HepG2 (cell line): ENCODE measurements at regions of chr4 and their contacts with region 1.

Region 1: DNA sequence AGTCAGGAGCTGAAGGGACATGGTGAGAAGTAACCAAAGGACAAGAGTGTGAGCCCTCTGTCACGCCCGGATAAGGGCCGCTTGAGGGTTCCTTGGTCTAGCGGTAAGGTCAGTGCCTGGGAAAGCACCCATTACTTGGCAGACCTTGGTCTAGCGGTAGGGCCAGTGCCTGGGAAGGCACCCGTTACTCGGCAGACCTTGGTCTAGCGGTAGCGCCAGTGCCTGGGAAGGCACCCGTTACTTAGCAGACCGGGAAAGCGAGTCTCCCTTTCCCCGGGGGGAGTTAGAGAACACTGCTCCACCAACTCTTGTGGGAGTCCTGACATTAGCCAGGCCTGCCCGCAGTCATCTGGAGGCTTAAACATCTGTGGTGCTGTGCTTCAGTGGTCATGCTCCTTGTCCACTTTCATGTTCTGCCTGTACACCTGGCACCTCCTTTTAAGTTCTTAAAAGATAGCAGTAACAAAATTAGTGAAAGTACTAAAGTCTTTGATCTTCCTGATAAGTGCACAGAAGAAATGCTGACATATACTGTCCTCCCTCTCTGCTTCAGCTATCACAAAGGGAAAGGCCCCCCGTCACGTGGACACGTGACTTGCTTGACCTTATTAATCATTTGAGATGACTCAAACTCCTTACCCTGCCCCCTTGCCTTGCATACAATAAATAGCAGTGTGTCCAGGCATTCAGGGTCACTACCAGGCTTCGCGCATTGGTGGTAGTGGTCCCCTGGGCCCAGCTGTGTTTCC is 9.3 kb upstream of the SEC24B start:
- DNase-seq: no peak
- ATAC-seq: no peak
- H3K4me3 ChIP-seq: no peak overlapping the region
- H3K27ac ChIP-seq: no peak overlapping the region
- H3K4me1 ChIP-seq: no peaks in the 10 kb centered on the region
- H3K27me3 ChIP-seq: no peaks in the 10 kb centered on the region
- CTCF ChIP-seq: no peak
- EP300 ChIP-seq: no peak
- POLR2A ChIP-seq: no peak
- RAD21 ChIP-seq: no peak

Region 2: GRCh38 chr4:109574102-109574850 is 150.0 kb after region 1 on chr4:
- CTCF ChIA-PET with region 1: no interaction called
- POLR2A ChIA-PET with region 1: no interaction called
- in situ Hi-C with region 1: no loop called
- intact Hi-C with region 1: loop called (anchors 5 kb)
- DNase-seq: peak; percentile 42
- ATAC-seq: peak; percentile 91
- H3K4me3 ChIP-seq: no peak overlapping the region
- H3K27ac ChIP-seq: no peak overlapping the region
- H3K4me1 ChIP-seq: no peaks in the 10 kb centered on the region
- H3K27me3 ChIP-seq: no peaks in the 10 kb centered on the region
- CTCF ChIP-seq: peak; percentile 38
- EP300 ChIP-seq: no peak
- POLR2A ChIP-seq: no peak
- RAD21 ChIP-seq: no peak

Region 3: DNA sequence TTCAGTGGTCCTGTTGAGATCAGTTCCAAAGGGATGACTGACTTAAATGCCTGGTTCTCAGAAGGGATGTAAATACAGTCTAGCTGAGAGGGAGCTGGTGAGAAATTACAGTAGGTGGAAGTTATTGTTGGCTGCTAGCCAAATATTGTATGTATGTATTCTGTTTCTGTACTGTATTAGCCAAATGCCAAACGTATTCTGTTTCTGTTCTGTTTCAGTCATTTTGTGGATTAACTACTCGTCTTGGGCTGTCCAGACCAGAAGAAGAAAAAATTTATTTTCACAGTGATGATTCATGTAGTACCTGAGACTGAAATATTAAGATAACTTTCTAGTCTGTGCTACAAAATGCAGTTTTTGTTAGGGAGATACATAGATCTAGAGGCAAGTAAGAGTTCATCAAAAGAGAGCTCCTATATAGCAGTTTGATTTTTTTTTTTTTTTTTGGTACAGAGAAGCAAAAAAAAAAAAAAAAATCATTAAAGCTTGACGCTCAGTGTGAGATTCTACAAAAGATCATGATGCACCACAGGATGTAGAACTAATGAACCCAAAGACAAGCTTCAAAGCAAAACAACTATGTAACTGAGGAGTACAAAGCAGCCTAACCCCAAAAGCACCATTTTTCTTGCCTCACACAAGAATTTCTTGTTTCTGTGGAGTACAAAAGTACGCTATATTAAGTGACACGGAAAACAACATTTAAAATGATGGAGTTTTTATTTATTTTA is 224.2 kb after region 1 on chr4:
- CTCF ChIA-PET with region 1: interaction called, 4 read pairs
- POLR2A ChIA-PET with region 1: no interaction called
- in situ Hi-C with region 1: loop called (anchors 10 kb)
- intact Hi-C with region 1: loop called (anchors 1 kb)
- DNase-seq: no peak
- ATAC-seq: no peak
- H3K4me3 ChIP-seq: no peak overlapping the region
- H3K27ac ChIP-seq: no peak overlapping the region
- H3K4me1 ChIP-seq: no peaks in the 10 kb centered on the region
- H3K27me3 ChIP-seq: no peaks in the 10 kb centered on the region; a peak in 1 of 5 replicates
- CTCF ChIP-seq: no peak
- EP300 ChIP-seq: no peak
- POLR2A ChIP-seq: no peak
- RAD21 ChIP-seq: no peak

Region 4: DNA sequence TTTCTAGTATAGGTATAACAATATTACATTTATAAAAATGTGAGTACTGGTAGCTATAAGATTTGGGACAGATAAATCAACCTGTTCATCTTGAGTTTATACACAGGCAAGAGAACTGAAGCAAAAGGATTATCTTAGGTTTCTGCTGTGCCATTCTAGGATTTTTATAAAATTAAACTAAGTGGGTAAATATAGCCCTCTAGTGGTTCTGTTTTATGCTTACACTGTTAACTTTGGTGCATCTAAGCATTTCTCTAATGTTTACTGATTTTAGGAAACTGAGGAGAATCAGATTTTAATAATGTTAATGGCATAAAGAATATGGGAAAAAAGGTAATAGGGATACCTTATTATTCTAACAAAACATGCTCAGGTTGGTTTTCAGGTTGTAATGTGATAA is 402.5 kb after region 1 on chr4:
- CTCF ChIA-PET with region 1: interaction called, 3 read pairs
- POLR2A ChIA-PET with region 1: no interaction called
- in situ Hi-C with region 1: no loop called
- intact Hi-C with region 1: loop called (anchors 1 kb)
- DNase-seq: no peak
- ATAC-seq: peak; percentile 57; the same call in 2 of the 3 replicates
- H3K4me3 ChIP-seq: no peak overlapping the region
- H3K27ac ChIP-seq: no peak overlapping the region
- H3K4me1 ChIP-seq: no peaks in the 10 kb centered on the region
- H3K27me3 ChIP-seq: no peaks in the 10 kb centered on the region
- CTCF ChIP-seq: peak; percentile 38
- EP300 ChIP-seq: no peak
- POLR2A ChIP-seq: no peak
- RAD21 ChIP-seq: no peak

Region 5: GRCh38 chr4:109977854-109978501 is 553.7 kb after region 1 on chr4:
- CTCF ChIA-PET with region 1: interaction called, 16 read pairs
- POLR2A ChIA-PET with region 1: no interaction called
- in situ Hi-C with region 1: loop called (anchors 10 kb)
- intact Hi-C with region 1: loop called (anchors 1 kb)
- DNase-seq: peak; percentile 18
- ATAC-seq: no peak
- H3K4me3 ChIP-seq: no peak overlapping the region
- H3K27ac ChIP-seq: no peak overlapping the region
- H3K4me1 ChIP-seq: peaks cover 17% of the 10 kb centered on the region
- H3K27me3 ChIP-seq: no peaks in the 10 kb centered on the region
- CTCF ChIP-seq: peak; percentile 50
- EP300 ChIP-seq: no peak
- POLR2A ChIP-seq: no peak
- RAD21 ChIP-seq: no peak